CD8-positive, alpha-beta memory T cell (primary cell): ENCODE measurements at regions of chr15 and their contacts with region 1.

Region 1: DNA sequence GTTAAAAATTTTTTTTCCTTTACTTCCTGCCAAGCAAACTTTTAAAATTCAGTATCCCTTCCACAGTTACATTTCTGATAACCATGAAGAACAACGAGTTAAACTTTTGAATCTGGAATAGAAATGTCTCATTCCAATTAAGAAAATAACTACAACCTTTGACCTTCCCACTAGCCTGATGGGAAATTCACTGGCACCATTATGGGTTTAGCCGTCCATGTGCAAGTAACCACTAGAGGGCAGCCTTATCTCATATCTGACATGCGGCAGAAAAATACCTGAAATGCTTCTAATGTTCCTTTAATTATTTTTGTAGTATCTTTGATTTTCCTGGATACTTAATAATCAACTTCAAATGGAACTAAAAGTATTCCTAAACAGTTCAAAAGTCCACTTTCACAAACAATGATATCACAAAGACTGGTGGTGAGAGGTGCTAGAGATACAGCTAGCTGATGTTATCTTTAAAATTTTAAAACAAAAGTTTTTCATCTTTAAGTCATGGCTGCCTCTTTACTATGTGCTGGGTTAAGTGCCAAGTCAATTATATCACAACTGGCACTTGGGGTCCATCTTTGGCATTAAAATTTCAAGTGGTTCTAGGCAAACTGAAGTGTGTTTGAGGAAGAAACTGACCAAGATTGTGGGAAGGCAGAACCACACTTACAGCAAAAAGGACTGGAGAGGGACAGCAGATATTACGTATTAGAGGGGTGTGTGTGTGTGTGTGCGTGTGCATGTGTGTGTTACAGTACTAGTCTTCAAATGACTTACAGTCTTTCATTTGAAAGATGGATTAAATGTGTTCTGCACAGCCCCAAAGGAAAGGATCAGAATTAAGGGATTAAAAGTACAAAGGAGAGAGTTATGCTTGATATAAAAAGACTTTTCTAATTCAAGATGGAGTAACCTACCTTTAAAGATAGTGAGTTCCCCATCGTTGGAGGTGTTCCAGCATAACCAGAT is 107.1 kb upstream of the ICE2 start:
- DNase-seq: peak in 4 of 5 donors; percentile 48 to 76 (median 74)
- H3K4me3 ChIP-seq: peak overlapping the region; percentile 16
- H3K4me3 Mint-ChIP-seq: peak overlapping the region; percentile 67 to 94 (median 81)
- H3K27ac ChIP-seq: no peak overlapping the region
- H3K27ac Mint-ChIP-seq: peak overlapping the region; percentile 66 to 99 (median 94)
- H3K4me1 ChIP-seq: peaks cover 92% of the 10 kb centered on the region
- H3K4me1 Mint-ChIP-seq: peaks cover 86 to 98% (median 93%) of the 10 kb centered on the region in 3 donors
- H3K27me3 ChIP-seq: no peaks in the 10 kb centered on the region
- H3K27me3 Mint-ChIP-seq: peaks cover 0 to 2% of the 10 kb centered on the region in 2 donors

Region 2: DNA sequence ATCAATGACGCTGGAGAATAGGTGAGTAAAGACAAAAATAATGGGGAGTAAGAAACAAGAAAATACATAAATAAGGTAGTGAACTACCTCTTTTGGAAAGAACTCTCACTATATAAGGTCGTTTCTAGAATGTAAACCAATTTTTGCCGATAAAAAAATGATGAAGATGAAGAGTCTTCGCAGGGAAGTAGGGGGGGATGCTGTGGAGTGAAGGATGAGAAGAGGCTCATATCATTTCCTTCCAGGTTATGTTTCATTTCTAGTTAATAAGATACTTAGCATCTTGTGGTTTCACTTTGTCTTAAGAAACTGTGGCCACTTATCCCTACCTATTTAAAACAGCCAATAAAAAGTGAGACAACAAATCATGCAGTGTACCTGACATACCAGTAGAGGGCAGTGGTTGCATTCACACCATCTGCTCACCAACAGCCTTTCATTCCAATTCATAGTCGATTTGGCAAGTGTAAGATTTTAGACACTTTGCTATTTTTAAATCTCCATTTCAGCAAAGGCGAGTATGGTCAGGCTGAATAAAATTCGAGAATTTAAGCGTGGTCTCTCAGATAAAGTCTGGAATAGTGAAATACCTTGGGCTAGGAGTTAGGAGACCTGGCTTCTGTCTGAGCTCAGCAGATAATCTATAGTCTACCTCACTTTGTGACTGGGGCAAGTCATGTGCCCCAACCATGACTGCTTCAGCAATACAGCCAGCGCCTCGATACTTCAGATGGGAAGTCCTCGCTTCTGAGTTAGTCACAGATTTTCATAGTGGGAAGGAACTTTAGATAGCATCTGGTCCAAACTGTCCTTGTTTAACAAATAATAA is 78.2 kb before region 1 on chr15:
- CTCF ChIA-PET with region 1: interaction called, 11 read pairs
- POLR2A ChIA-PET with region 1: interaction called, 3 read pairs
- DNase-seq: peak; percentile 12 to 70 (median 69)
- H3K4me3 ChIP-seq: no peak overlapping the region
- H3K4me3 Mint-ChIP-seq: peak overlapping the region in 6 of 7 donors; percentile 2 to 55 (median 23)
- H3K27ac ChIP-seq: no peak overlapping the region
- H3K27ac Mint-ChIP-seq: peak overlapping the region; percentile 61 to 93 (median 88)
- H3K4me1 ChIP-seq: peaks cover 23% of the 10 kb centered on the region
- H3K4me1 Mint-ChIP-seq: peaks cover 46 to 62% (median 56%) of the 10 kb centered on the region in 3 donors
- H3K27me3 ChIP-seq: no peaks in the 10 kb centered on the region
- H3K27me3 Mint-ChIP-seq: peaks cover 0 to 3% of the 10 kb centered on the region in 2 donors

Region 3: GRCh38 chr15:60551781-60552161 is 34.3 kb before region 1 on chr15:
- CTCF ChIA-PET with region 1: interaction called, 11 read pairs
- POLR2A ChIA-PET with region 1: interaction called, 27 read pairs
- DNase-seq: no peak
- H3K4me3 ChIP-seq: peak overlapping the region; percentile 14
- H3K4me3 Mint-ChIP-seq: peak overlapping the region; percentile 57 to 93 (median 83)
- H3K27ac ChIP-seq: no peak overlapping the region
- H3K27ac Mint-ChIP-seq: peak overlapping the region; percentile 84 to 99 (median 96)
- H3K4me1 ChIP-seq: peaks cover 87% of the 10 kb centered on the region
- H3K4me1 Mint-ChIP-seq: peaks cover 93 to 98% (median 98%) of the 10 kb centered on the region in 3 donors
- H3K27me3 ChIP-seq: no peaks in the 10 kb centered on the region
- H3K27me3 Mint-ChIP-seq: no peaks in the 10 kb centered on the region

Region 4: DNA sequence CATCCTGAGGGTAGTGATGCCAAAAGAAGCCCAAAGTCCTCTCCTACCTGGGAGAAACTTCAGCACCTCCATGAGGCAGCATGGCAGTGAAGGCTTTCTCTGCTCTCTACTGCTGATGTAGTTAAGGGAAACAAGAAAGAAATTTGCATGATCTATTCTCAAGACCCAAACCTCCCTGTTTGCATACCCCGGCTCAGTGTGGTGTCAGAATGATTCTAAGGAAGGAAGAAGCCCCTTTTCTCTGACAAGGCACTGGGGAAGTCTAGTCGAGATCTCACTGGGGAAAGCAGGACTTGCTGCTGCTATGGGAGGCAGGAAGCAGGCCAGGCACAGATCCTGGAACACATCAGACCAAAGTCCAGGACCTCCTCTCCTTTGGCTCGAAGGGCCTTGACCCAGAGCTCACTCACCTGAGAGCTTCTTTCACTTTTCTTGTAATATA is 17.7 kb before region 1 on chr15:
- CTCF ChIA-PET with region 1: interaction called, 10 read pairs
- POLR2A ChIA-PET with region 1: interaction called, 80 read pairs
- DNase-seq: no peak
- H3K4me3 ChIP-seq: no peak overlapping the region
- H3K4me3 Mint-ChIP-seq: peak overlapping the region; percentile 28 to 88 (median 70)
- H3K27ac ChIP-seq: no peak overlapping the region
- H3K27ac Mint-ChIP-seq: peak overlapping the region; percentile 84 to 99 (median 96)
- H3K4me1 ChIP-seq: peaks cover 91% of the 10 kb centered on the region
- H3K4me1 Mint-ChIP-seq: peaks cover 94 to 97% (median 97%) of the 10 kb centered on the region in 3 donors
- H3K27me3 ChIP-seq: no peaks in the 10 kb centered on the region
- H3K27me3 Mint-ChIP-seq: no peaks in the 10 kb centered on the region

Region 5: GRCh38 chr15:60865507-60865906 is 279.5 kb after region 1 on chr15:
- CTCF ChIA-PET with region 1: interaction called, 30 read pairs
- POLR2A ChIA-PET with region 1: no interaction called
- DNase-seq: no peak
- H3K4me3 ChIP-seq: no peak overlapping the region
- H3K4me3 Mint-ChIP-seq: no peak overlapping the region
- H3K27ac ChIP-seq: no peak overlapping the region
- H3K27ac Mint-ChIP-seq: peak overlapping the region in 2 of 8 donors; percentile 2 to 35
- H3K4me1 ChIP-seq: peaks cover 6% of the 10 kb centered on the region
- H3K4me1 Mint-ChIP-seq: peaks cover 16 to 26% (median 20%) of the 10 kb centered on the region in 3 donors
- H3K27me3 ChIP-seq: no peaks in the 10 kb centered on the region
- H3K27me3 Mint-ChIP-seq: peaks cover 0 to 4% of the 10 kb centered on the region in 2 donors